Thyroid gland (tissue), 4 donors: ENCODE measurements at regions of chrX and their contacts with region 1.

Region 1: DNA sequence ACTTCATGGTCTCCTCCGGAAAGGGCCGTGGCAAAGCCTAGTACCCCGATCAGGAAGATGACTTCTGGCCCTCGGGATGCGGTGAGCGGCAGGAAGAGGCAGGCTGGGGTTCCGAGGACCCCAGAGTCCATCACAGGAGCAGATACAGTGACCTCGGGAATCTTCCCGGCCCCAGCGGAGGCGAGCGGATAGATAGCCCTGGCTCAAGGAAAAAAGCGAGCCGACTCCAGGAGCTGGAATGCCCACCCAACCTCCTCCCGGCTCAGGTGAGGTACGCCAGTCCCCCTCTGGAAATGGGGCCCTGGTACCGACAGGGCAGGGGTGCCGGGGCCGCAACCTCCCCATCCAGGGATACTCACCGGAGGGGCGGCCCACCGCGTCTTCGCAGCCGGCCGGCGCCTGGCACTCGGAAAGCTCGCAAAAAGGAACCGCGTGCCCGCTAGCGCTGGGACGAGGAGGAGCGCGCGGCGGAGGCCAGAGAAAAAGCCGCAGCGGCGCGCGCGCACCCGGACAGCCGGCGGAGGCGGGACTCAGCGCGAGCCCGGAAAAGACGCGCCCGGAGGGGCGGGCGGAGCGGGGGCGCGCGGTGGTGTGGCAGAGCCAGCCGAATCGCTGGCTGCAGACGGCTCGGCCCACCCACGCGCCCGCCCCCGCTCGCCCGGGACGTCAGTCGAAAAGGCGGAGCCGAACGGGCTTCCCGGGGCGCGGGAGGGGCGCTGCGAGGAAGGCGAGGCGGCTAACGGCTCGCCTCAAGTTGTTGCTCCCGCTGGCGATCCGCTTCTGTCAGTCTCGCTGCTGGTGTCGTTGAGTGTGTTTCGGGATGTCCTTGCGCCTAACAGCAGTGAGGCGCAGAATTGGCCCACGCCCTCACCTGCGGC is at the start of gene ACSL4:
- DNase-seq: peak; percentile 83 to 86
- H3K4me3 ChIP-seq: peak within 1 kb of the TSS; percentile 43 to 75 (median 47)
- H3K27ac ChIP-seq: peak within 1 kb of the TSS; percentile 44 to 76 (median 61)
- H3K4me1 ChIP-seq: no peaks in the 10 kb centered on the region
- H3K27me3 ChIP-seq: no peaks in the 10 kb centered on the region
- CTCF ChIP-seq: no peak
- POLR2A ChIP-seq: peak in 1 of 2 donors; percentile 78
- total RNA-seq, gene ACSL4: 38.4 to 62.9 (median 46.9) TPM

Region 2: GRCh38 chrX:109856974-109857373 is 124.0 kb after region 1 on chrX:
- intact Hi-C with region 1: loop called (anchors 10 kb)
- DNase-seq: no peak
- H3K4me3 ChIP-seq: no peak overlapping the region
- H3K27ac ChIP-seq: no peak overlapping the region
- H3K4me1 ChIP-seq: no peaks in the 10 kb centered on the region
- H3K27me3 ChIP-seq: no peaks in the 10 kb centered on the region
- CTCF ChIP-seq: peak; percentile 53 to 66 (median 62)
- POLR2A ChIP-seq: no peak